PC-3 (cell line): ENCODE measurements at regions of chr17 and their contacts with region 1.

Region 1: GRCh38 chr17:39952680-39953470 is 9.9 kb upstream of the GSDMA start:
- DNase-seq: peak; percentile 79
- ATAC-seq: peak; percentile 93
- H3K4me3 ChIP-seq: peak overlapping the region; percentile 60
- H3K27ac ChIP-seq: no peak overlapping the region
- H3K4me1 ChIP-seq: peaks cover 8% of the 10 kb centered on the region
- H3K27me3 ChIP-seq: no peaks in the 10 kb centered on the region
- CTCF ChIP-seq: no peak

Region 2: DNA sequence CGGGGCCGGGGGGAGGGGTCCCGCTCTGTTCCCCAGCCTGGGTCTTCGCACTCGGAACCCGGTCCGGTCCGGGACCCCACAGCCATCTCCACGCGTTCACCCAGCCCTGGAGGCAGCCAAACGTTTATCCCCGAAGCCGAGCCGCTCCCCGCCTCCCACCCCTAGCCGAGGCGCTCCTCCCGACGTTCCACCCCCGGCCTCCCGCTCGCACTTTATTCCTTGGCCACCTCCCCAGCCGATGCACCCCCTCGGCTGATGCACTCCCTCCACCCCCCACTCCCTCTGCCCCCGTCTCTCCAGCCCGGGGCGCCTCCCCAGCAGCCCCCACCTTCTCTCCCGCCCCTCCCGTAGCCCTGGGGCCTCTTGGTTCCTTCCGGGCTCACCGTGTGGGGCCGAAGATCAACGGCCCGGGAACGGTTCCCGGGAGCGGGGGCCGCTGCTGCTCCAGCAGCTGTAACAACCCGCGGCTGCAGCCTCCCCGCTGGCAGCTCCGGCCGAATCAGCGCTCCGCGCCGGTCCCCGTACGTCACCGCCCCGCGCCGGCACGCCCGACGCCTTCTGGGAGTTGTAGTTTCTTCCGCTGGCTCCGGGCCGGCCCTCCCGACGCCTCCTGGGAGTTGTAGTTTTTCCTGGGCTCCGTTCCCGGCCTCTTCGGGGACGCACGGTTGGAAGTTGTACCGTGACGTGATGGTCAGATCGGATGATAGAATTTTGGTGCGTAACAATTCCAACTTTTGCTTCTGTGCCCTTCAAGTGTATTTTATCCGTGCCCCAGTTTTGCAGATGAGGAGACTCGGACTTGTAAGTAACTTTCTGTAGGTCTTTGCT is 25.6 kb before region 1 on chr17 and contains the starts of genes LRRC3C and ORMDL3:
- CTCF ChIA-PET with region 1: no interaction called
- POLR2A ChIA-PET with region 1: no interaction called
- intact Hi-C with region 1: loop called (anchors 2 kb)
- DNase-seq: peak; percentile 85
- ATAC-seq: peak; percentile 70
- H3K4me3 ChIP-seq: peak within 1 kb of the TSS; percentile 93
- H3K27ac ChIP-seq: peak within 1 kb of the TSS; percentile 54
- H3K4me1 ChIP-seq: peaks cover 43% of the 10 kb centered on the region
- H3K27me3 ChIP-seq: no peaks in the 10 kb centered on the region
- CTCF ChIP-seq: no peak
- total RNA-seq, gene LRRC3C: not detected in 2 replicates
- total RNA-seq, gene ORMDL3: 27.0 and 27.4 TPM in 2 replicates

Region 3: DNA sequence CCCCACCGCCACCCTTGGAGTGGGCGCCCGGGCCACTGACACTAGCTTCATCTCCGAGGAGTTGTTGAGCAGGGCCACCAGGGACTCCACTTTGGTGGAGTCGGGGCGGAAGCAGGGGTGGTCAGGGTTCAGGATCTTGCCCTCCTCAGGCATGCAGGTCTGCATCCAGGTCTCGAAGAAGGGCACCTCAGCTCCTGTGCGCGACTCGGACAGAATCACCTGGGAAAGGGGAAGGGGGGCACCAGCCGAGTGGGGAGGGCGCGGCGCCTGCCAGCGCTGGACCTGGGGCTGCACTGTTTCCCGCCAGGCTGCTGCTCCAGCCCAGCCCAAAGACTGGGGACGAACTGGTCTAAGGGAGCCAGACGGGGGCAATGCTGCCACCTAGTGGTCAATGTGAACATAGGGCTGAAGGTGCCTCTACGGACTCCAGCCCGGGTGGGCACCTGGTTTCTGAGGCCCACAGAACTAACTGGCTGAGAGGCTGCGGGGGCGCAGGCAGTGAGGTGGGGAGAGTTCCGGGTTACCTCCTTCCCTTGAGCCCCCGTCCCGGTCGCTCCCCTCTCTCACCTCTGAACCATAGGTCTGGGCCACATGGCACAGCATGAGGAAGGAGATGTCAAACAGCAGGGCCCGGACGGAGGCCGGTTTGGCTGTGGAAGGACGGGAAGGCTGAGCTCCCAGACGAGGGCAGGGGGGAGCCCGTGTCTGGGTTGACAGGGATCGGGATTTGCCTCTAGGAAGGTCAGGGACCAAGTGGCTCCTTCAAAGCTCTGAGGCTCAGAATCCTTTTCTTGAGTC is 74.1 kb after region 1 on chr17:
- CTCF ChIA-PET with region 1: no interaction called
- POLR2A ChIA-PET with region 1: no interaction called
- intact Hi-C with region 1: loop called (anchors 2 kb)
- DNase-seq: peak; percentile 83
- ATAC-seq: peak; percentile 72
- H3K4me3 ChIP-seq: no peak overlapping the region
- H3K27ac ChIP-seq: peak overlapping the region; percentile 97
- H3K4me1 ChIP-seq: peaks cover 52% of the 10 kb centered on the region
- H3K27me3 ChIP-seq: no peaks in the 10 kb centered on the region
- CTCF ChIP-seq: peak; percentile 81